HCT116 (cell line): ENCODE measurements at regions of chr1 and their contacts with region 1.

Region 1: DNA sequence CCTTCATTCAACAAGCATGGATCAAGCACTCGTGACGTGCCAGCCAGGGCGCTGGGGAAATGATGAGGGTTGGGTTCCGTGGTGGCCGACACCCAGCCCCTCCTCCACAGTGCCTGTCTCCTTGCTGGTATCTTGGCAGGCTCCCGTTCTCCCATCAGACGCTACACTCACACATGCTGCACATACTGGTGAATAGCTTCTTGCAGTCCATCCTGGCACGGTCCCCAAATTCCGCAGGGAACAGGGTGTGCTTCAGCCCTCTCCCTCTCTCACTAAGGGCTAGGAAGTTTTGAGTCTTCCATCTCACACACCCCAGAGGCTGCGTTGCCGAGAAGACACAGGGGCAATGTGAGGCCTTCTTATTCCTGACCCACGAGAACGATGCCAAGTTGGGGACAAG is 10.1 kb upstream of the MEF2D start:
- DNase-seq: no peak
- ATAC-seq: no peak
- H3K4me3 ChIP-seq: no peak overlapping the region
- H3K27ac ChIP-seq: no peak overlapping the region
- H3K4me1 ChIP-seq: peaks cover 5 to 16% of the 10 kb centered on the region in 2 experiments
- H3K27me3 ChIP-seq: no peaks in the 10 kb centered on the region
- CTCF ChIP-seq: no peak
- POLR2A ChIP-seq: no peak
- RAD21 ChIP-seq: no peak

Region 2: GRCh38 chr1:156490401-156491032 is 20.2 kb before region 1 on chr1:
- CTCF ChIA-PET with region 1: no interaction called
- POLR2A ChIA-PET with region 1: no interaction called
- RAD21 ChIA-PET with region 1: no interaction called
- intact Hi-C with region 1: no loop called
- DNase-seq: no peak
- ATAC-seq: peak; percentile 71
- H3K4me3 ChIP-seq: peak overlapping the region in 1 of 2 experiments; percentile 44; a peak in 3 of 4 replicates
- H3K27ac ChIP-seq: peak overlapping the region; percentile 33
- H3K4me1 ChIP-seq: peaks cover 40 to 60% of the 10 kb centered on the region in 2 experiments
- H3K27me3 ChIP-seq: no peaks in the 10 kb centered on the region
- CTCF ChIP-seq: peak in 2 of 3 experiments; percentile 17 to 21; a peak in 3 of 6 replicates
- POLR2A ChIP-seq: no peak
- RAD21 ChIP-seq: no peak

Region 3: DNA sequence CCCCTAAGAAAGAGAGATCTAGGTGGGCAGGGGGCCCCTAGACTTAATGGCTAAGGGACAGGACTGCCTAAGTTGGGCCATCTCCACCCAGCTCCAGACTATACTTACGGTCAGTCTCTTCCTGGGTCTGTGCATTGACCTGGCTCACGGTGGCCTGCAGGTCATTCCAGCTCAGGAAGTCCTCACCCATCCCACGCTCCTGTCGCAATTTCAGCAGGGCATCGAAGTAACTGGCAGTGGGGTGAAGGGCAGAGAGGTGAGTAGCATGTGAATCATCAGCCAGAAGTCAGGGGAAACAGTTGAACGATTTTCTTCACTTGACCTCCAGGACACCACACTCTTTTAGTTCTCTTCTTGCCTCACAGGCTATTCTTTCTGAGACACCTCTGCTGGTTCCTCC is 41.2 kb after region 1 on chr1:
- CTCF ChIA-PET with region 1: no interaction called
- POLR2A ChIA-PET with region 1: no interaction called
- RAD21 ChIA-PET with region 1: no interaction called
- intact Hi-C with region 1: loop called (anchors 5 kb)
- DNase-seq: peak; percentile 23
- ATAC-seq: peak; percentile 79
- H3K4me3 ChIP-seq: peak overlapping the region in 1 of 2 experiments; percentile 6; a peak in 1 of 4 replicates
- H3K27ac ChIP-seq: no peak overlapping the region
- H3K4me1 ChIP-seq: peaks cover 0 to 17% of the 10 kb centered on the region in 2 experiments; a peak in 2 of 4 replicates
- H3K27me3 ChIP-seq: no peaks in the 10 kb centered on the region
- CTCF ChIP-seq: no peak
- POLR2A ChIP-seq: no peak
- RAD21 ChIP-seq: no peak